ENCODE measurements at regions of chr17 and their contacts with region 1.

Region 1: DNA sequence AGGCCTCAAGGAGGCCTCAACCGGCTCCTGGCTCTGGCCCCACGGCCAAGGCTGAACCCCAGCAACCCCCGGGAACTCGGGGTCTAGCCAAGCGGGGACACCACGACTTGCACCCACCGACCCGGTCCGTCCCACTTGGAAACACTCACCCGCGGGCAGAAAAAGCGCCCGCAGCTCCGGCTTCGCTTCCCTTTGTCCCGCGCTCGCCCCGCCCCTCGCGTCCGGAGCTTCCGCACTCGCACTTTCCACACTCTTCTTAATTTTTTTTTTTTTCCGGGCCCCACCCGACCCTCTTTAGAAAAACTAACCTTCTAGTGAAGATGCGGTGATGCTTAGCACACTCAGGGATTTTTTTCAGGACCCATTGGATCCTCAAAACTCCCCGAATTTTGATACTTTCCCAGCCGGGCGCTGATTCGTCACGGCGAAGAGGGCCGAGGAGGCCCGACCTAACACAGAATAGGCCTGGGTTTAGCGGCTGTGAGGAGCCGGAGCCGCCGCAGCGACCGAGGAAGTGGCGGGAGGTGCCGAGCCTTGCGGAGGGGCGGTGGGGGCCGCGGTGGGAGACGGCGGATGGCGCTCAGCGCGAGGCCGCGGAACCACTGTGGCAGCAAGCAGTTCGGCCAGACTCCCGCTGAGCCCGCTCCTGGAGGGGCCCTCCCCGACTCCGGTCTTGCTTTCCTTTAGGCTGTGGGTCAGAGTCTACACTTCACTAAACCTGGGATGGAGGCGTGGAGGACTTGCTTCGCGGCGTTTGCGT is at the start of gene SMARCE1:
- DNase-seq: peak; percentile 70
- ATAC-seq: peak; percentile 74
- H3K4me3 Mint-ChIP-seq: peak within 1 kb of the TSS; percentile 81
- H3K27ac Mint-ChIP-seq: peak within 1 kb of the TSS; percentile 92
- H3K4me1 Mint-ChIP-seq: peaks cover 38% of the 10 kb centered on the region
- H3K27me3 Mint-ChIP-seq: no peaks in the 10 kb centered on the region
- CTCF ChIP-seq: no peak
- total RNA-seq, gene SMARCE1: 87.8 to 92.5 TPM

Region 2: DNA sequence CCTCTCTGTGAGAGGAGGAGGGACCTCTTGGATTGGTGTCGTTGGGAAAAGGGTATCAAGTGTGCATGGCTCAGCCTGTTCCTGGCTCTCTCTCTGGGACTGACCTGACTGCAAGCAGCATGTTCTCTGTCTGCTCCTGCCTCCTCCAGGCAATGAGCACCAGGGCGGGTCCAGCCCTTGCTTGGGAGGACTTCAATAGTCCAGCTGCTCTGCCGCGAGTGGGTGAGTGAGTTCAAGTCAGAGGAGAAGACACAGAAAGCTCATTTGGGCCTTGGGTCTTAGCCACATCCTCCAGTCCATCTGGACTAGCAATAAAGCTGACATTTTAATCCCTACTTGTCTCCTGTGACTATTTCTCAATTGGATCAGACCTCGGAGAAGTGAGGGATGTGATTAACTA is 121.1 kb before region 1 on chr17:
- CTCF ChIA-PET with region 1: no interaction called
- POLR2A ChIA-PET with region 1: no interaction called
- intact Hi-C with region 1: no loop called
- DNase-seq: no peak
- ATAC-seq: no peak
- H3K4me3 Mint-ChIP-seq: no peak overlapping the region
- H3K27ac Mint-ChIP-seq: no peak overlapping the region
- H3K4me1 Mint-ChIP-seq: peaks cover 37% of the 10 kb centered on the region
- H3K27me3 Mint-ChIP-seq: no peaks in the 10 kb centered on the region
- CTCF ChIP-seq: no peak

Region 3: DNA sequence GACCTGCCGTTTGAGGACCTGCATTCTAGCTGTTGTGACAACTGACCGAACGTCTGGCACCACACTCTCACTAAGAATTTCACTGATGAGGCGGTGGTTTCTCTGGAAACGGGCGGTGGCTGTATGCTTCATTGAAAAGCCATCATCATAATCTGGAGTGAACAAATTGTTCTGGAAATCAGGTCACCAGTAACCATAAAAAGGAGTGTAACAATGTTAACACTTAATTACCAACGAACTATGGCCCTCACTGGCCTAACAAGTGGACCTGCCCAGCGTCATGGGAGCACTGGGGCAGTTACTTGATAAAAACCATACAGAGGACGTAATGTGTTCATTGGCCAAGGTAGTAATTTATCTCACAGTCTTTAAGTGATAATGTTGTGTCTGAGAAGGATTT is 15.6 kb before region 1 on chr17:
- CTCF ChIA-PET with region 1: interaction called, 13 read pairs
- POLR2A ChIA-PET with region 1: interaction called, 11 read pairs
- intact Hi-C with region 1: no loop called
- DNase-seq: no peak
- ATAC-seq: no peak
- H3K4me3 Mint-ChIP-seq: no peak overlapping the region
- H3K27ac Mint-ChIP-seq: peak overlapping the region; percentile 1
- H3K4me1 Mint-ChIP-seq: peaks cover 14% of the 10 kb centered on the region
- H3K27me3 Mint-ChIP-seq: no peaks in the 10 kb centered on the region
- CTCF ChIP-seq: no peak

Measured in activated CD8-positive, alpha-beta T cell treated with anti-CD3 and anti-CD28 coated beads for 36 hours (primary cell).